HepG2 (cell line): ENCODE measurements at regions of chr1 and their contacts with region 1.

Region 1: GRCh38 chr1:93591676-93592550 is 89.7 kb downstream of the BCAR3 start:
- DNase-seq: peak; percentile 90
- ATAC-seq: peak; percentile 86
- H3K4me3 ChIP-seq: peak overlapping the region; percentile 81 to 88 (median 86)
- H3K27ac ChIP-seq: peak overlapping the region; percentile 94
- H3K4me1 ChIP-seq: peaks cover 58% of the 10 kb centered on the region
- H3K27me3 ChIP-seq: no peaks in the 10 kb centered on the region; a peak in 1 of 5 replicates
- CTCF ChIP-seq: no peak
- EP300 ChIP-seq: peak in 1 of 2 experiments; percentile 75; a peak in 2 of 4 replicates
- POLR2A ChIP-seq: peak; percentile 69 to 71
- RAD21 ChIP-seq: no peak; the same call in 1 of the 2 replicates

Region 2: GRCh38 chr1:93447516-93448291 is 144.2 kb before region 1 on chr1 and contains the start of gene FNBP1L:
- CTCF ChIA-PET with region 1: no interaction called
- POLR2A ChIA-PET with region 1: interaction called, 4 read pairs
- in situ Hi-C with region 1: no loop called
- intact Hi-C with region 1: loop called (anchors 5 kb)
- DNase-seq: peak; percentile 65
- ATAC-seq: peak; percentile 90
- H3K4me3 ChIP-seq: peak within 1 kb of the TSS; percentile 87 to 99 (median 99)
- H3K27ac ChIP-seq: peak within 1 kb of the TSS; percentile 90
- H3K4me1 ChIP-seq: peaks cover 31% of the 10 kb centered on the region
- H3K27me3 ChIP-seq: no peaks in the 10 kb centered on the region; a peak in 1 of 5 replicates
- CTCF ChIP-seq: no peak
- EP300 ChIP-seq: no peak
- POLR2A ChIP-seq: peak; percentile 72 to 85
- RAD21 ChIP-seq: no peak
- total RNA-seq, gene FNBP1L: 27.1 and 41.3 TPM in 2 replicates

Region 3: GRCh38 chr1:93502561-93502960 is 89.4 kb before region 1 on chr1:
- CTCF ChIA-PET with region 1: no interaction called
- POLR2A ChIA-PET with region 1: no interaction called
- in situ Hi-C with region 1: no loop called
- intact Hi-C with region 1: no loop called
- DNase-seq: no peak
- ATAC-seq: no peak
- H3K4me3 ChIP-seq: no peak overlapping the region
- H3K27ac ChIP-seq: no peak overlapping the region
- H3K4me1 ChIP-seq: no peaks in the 10 kb centered on the region
- H3K27me3 ChIP-seq: no peaks in the 10 kb centered on the region
- CTCF ChIP-seq: no peak
- EP300 ChIP-seq: no peak
- POLR2A ChIP-seq: no peak
- RAD21 ChIP-seq: no peak

Region 4: DNA sequence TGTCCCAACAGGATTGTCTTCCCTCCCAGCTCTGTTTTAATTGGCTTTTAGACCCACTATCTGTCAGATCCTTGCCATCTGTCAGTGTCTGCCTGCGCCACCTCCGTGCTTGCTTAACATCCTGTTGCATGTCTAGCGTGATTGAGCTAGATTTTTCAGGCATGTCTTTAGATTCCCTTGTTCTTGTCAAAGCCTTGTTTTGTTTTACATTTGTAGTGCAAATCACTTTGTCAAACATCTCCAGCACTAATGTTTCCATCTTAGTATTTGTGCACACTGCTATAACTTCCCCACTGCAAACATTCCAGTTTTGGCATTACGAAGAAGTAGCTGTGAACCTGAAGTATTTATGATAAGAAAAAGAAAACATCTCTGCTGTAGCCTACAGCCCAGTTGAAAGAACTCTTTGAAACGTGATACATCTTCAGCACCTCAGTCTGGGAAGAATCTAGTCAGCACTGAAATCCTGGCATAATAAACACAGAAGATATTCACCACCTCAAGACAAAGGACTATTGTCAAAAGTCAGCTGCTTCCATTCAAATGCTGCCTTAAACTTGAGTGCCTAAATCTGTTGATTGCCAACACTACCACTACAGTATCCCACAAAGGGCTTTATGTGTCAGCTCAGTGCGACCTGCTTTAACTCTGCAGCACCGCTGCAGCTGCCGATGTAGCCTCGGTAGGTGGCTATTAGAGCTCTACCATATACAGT is 39.0 kb before region 1 on chr1:
- CTCF ChIA-PET with region 1: no interaction called
- POLR2A ChIA-PET with region 1: interaction called, 10 read pairs
- in situ Hi-C with region 1: no loop called
- intact Hi-C with region 1: no loop called
- DNase-seq: peak; percentile 71
- ATAC-seq: peak; percentile 77
- H3K4me3 ChIP-seq: no peak overlapping the region
- H3K27ac ChIP-seq: peak overlapping the region; percentile 0
- H3K4me1 ChIP-seq: peaks cover 41% of the 10 kb centered on the region
- H3K27me3 ChIP-seq: no peaks in the 10 kb centered on the region; a peak in 1 of 5 replicates
- CTCF ChIP-seq: no peak
- EP300 ChIP-seq: no peak
- POLR2A ChIP-seq: no peak
- RAD21 ChIP-seq: no peak

Region 5: DNA sequence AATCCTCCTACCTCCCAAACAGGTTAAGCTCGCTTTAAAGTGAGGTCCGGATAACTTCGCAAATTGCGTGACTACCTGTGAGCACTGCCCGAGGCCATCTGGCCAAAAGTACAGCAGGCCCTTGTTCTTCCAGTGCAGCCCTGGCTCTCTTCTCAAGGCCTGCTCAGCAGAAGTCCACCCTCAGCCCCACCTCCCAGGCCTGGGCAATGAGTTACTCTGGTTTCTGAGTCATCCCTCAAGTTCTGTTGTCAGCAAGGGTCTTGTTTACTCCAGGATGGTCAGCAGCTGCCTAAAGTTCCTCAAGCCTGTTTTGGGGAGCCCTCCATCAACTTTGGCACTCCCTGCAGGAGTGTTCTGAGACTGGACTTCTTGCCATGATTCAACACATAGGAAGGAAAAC is 12.0 kb before region 1 on chr1:
- CTCF ChIA-PET with region 1: no interaction called
- POLR2A ChIA-PET with region 1: interaction called, 33 read pairs
- in situ Hi-C with region 1: no loop called
- intact Hi-C with region 1: no loop called
- DNase-seq: peak; percentile 64
- ATAC-seq: peak; percentile 82
- H3K4me3 ChIP-seq: no peak overlapping the region
- H3K27ac ChIP-seq: peak overlapping the region; percentile 50
- H3K4me1 ChIP-seq: peaks cover 45% of the 10 kb centered on the region
- H3K27me3 ChIP-seq: no peaks in the 10 kb centered on the region
- CTCF ChIP-seq: no peak
- EP300 ChIP-seq: no peak
- POLR2A ChIP-seq: no peak
- RAD21 ChIP-seq: no peak

Region 6: GRCh38 chr1:93607814-93608186 is 15.9 kb after region 1 on chr1:
- CTCF ChIA-PET with region 1: no interaction called
- POLR2A ChIA-PET with region 1: interaction called, 214 read pairs
- in situ Hi-C with region 1: no loop called
- intact Hi-C with region 1: no loop called
- DNase-seq: no peak
- ATAC-seq: no peak; the same call in 2 of the 3 replicates
- H3K4me3 ChIP-seq: no peak overlapping the region
- H3K27ac ChIP-seq: no peak overlapping the region
- H3K4me1 ChIP-seq: peaks cover 61% of the 10 kb centered on the region
- H3K27me3 ChIP-seq: no peaks in the 10 kb centered on the region
- CTCF ChIP-seq: no peak
- EP300 ChIP-seq: no peak
- POLR2A ChIP-seq: no peak; a peak in 1 of 4 replicates
- RAD21 ChIP-seq: no peak

Region 7: DNA sequence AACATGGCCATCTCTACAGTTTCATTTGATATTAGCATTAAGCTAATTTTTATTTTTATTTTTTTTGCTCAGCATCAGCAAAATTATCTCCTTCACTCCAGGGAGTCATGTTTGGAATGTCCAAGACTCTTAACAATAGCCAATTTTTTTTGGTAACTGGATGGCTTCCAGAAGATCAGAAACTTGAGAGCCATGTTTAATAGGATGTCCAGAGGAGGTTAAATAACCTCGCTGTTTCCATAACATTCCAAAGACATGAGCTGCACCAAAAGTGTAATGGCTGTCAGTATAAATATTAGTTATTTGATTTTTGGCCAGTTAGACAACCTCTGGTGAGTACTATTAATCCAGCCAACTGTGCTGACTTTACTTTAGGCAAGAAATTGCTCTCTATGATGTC is 206.4 kb after region 1 on chr1:
- CTCF ChIA-PET with region 1: no interaction called
- POLR2A ChIA-PET with region 1: no interaction called
- in situ Hi-C with region 1: no loop called
- intact Hi-C with region 1: no loop called
- DNase-seq: no peak
- ATAC-seq: no peak
- H3K4me3 ChIP-seq: no peak overlapping the region
- H3K27ac ChIP-seq: no peak overlapping the region
- H3K4me1 ChIP-seq: peaks cover 45% of the 10 kb centered on the region
- H3K27me3 ChIP-seq: no peaks in the 10 kb centered on the region
- CTCF ChIP-seq: no peak
- EP300 ChIP-seq: no peak
- POLR2A ChIP-seq: no peak
- RAD21 ChIP-seq: no peak